CD8-positive, alpha-beta memory T cell (primary cell): ENCODE measurements at regions of chr4 and their contacts with region 1.

Region 1: DNA sequence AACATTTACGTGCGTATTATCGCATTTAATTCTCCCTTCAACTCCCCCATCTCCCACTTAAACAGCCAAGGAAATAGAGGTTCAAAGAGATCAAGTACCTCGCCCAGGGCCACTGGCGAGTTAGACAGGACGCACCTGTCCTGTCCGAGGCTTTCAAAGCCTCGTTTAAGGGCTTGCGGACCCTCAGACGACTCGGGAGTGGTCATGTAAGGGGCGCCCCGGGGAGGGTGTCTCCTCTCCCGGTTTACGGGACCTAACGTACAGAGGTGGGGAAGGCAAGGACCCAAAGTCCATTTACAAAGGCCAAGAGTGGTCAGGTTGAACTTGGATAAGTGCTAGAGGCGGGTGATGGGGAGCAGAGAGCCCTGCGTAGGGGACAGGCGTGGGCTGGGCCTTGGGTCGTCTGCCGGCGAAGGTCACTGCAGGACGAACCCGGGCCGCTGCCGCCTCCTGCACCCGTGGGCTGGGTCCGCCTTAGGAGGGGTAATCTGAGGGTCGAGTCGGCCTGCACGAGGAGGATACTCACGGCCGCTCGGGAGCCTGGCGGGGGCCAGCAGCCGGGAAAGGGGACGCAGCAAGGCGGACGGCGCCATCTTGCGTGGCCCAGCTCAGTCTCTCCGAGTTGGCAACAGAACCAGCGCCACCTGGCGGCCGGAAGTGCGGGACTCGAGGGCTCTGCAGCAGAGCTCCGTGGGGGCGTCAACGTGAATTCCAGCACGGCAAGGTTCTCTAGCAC is 5.9 kb upstream of the NAA15 start:
- DNase-seq: peak; percentile 89 to 98 (median 97)
- H3K4me3 ChIP-seq: peak overlapping the region; percentile 77
- H3K4me3 Mint-ChIP-seq: peak overlapping the region; percentile 95 to 100 (median 96)
- H3K27ac ChIP-seq: peak overlapping the region; percentile 91
- H3K27ac Mint-ChIP-seq: peak overlapping the region; percentile 97 to 99 (median 98)
- H3K4me1 ChIP-seq: peaks cover 33% of the 10 kb centered on the region
- H3K4me1 Mint-ChIP-seq: peaks cover 23 to 54% (median 49%) of the 10 kb centered on the region in 3 donors
- H3K27me3 ChIP-seq: no peaks in the 10 kb centered on the region
- H3K27me3 Mint-ChIP-seq: no peaks in the 10 kb centered on the region

Region 2: GRCh38 chr4:139099366-139099982 is 195.9 kb before region 1 on chr4:
- CTCF ChIA-PET with region 1: interaction called, 27 read pairs
- POLR2A ChIA-PET with region 1: no interaction called
- DNase-seq: peak; percentile 56 to 81 (median 64)
- H3K4me3 ChIP-seq: no peak overlapping the region
- H3K4me3 Mint-ChIP-seq: no peak overlapping the region
- H3K27ac ChIP-seq: no peak overlapping the region
- H3K27ac Mint-ChIP-seq: peak overlapping the region in 1 of 8 donors; percentile 4
- H3K4me1 ChIP-seq: no peaks in the 10 kb centered on the region
- H3K4me1 Mint-ChIP-seq: peaks cover 0 to 4% (median 2%) of the 10 kb centered on the region in 3 donors
- H3K27me3 ChIP-seq: no peaks in the 10 kb centered on the region
- H3K27me3 Mint-ChIP-seq: no peaks in the 10 kb centered on the region

Region 3: GRCh38 chr4:139177868-139178611 is 117.3 kb before region 1 on chr4:
- CTCF ChIA-PET with region 1: interaction called, 10 read pairs
- POLR2A ChIA-PET with region 1: interaction called, 25 read pairs
- DNase-seq: peak; percentile 81 to 90 (median 89)
- H3K4me3 ChIP-seq: peak overlapping the region; percentile 96
- H3K4me3 Mint-ChIP-seq: peak overlapping the region; percentile 89 to 97 (median 92)
- H3K27ac ChIP-seq: peak overlapping the region; percentile 87
- H3K27ac Mint-ChIP-seq: peak overlapping the region; percentile 84 to 98 (median 94)
- H3K4me1 ChIP-seq: peaks cover 10% of the 10 kb centered on the region
- H3K4me1 Mint-ChIP-seq: peaks cover 21 to 28% (median 27%) of the 10 kb centered on the region in 3 donors
- H3K27me3 ChIP-seq: no peaks in the 10 kb centered on the region
- H3K27me3 Mint-ChIP-seq: no peaks in the 10 kb centered on the region

Region 4: DNA sequence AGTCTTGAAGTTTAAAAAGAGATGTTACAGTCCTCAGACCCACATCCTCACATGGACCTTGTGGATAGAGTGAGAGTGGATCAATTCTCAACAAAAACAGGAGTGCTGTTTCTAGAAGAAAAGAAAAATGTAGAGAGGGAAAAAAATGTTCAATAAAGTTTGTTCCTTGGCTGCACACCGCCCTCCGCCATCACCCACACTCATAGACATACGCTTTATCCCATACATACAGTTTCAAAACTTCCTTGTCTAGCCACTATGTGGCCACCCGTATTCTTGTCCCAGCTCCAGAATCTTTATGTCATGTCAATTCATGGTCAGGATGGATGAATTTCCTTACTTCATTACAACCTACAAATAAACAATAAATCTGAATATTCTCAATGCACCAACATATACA is 94.9 kb before region 1 on chr4:
- CTCF ChIA-PET with region 1: no interaction called
- POLR2A ChIA-PET with region 1: no interaction called
- DNase-seq: no peak
- H3K4me3 ChIP-seq: no peak overlapping the region
- H3K4me3 Mint-ChIP-seq: no peak overlapping the region
- H3K27ac ChIP-seq: no peak overlapping the region
- H3K27ac Mint-ChIP-seq: peak overlapping the region in 1 of 8 donors; percentile 29
- H3K4me1 ChIP-seq: no peaks in the 10 kb centered on the region
- H3K4me1 Mint-ChIP-seq: no peaks in the 10 kb centered on the region
- H3K27me3 ChIP-seq: no peaks in the 10 kb centered on the region
- H3K27me3 Mint-ChIP-seq: peaks cover 2 to 31% of the 10 kb centered on the region in 2 donors

Region 5: DNA sequence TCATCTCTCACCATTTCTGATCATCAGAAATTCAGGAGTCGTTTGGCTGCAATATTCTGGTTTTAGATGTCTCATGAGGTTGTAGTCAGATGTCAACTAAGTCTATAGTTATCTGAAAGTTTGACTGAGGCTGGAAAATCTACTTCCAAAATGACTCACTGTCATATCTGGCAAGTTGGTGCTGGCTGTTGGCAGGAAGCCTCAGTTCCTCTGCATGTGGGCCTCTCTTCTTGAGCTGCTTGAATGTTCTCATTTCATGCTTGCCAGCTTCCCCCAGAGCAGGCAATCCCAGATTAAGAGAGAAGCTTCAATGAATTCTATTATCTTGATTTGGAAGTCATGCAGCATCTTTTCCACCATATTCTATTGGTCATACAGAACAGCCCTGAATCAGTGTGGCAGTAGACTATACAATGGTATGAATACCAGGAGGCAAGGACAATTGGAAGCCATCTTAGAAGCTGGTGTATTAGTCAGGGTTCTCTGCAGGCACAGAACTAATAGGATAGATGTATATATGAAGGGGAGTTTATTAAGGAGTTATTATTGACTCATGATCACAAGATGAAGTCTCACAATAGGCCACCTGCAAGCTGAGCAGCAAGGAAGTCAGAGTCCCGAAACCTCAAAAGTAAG is 71.6 kb before region 1 on chr4:
- CTCF ChIA-PET with region 1: interaction called, 23 read pairs
- POLR2A ChIA-PET with region 1: no interaction called
- DNase-seq: no peak
- H3K4me3 ChIP-seq: no peak overlapping the region
- H3K4me3 Mint-ChIP-seq: no peak overlapping the region
- H3K27ac ChIP-seq: no peak overlapping the region
- H3K27ac Mint-ChIP-seq: no peak overlapping the region
- H3K4me1 ChIP-seq: peaks cover 6% of the 10 kb centered on the region
- H3K4me1 Mint-ChIP-seq: peaks cover 8 to 10% (median 9%) of the 10 kb centered on the region in 3 donors
- H3K27me3 ChIP-seq: no peaks in the 10 kb centered on the region
- H3K27me3 Mint-ChIP-seq: no peaks in the 10 kb centered on the region

Region 6: DNA sequence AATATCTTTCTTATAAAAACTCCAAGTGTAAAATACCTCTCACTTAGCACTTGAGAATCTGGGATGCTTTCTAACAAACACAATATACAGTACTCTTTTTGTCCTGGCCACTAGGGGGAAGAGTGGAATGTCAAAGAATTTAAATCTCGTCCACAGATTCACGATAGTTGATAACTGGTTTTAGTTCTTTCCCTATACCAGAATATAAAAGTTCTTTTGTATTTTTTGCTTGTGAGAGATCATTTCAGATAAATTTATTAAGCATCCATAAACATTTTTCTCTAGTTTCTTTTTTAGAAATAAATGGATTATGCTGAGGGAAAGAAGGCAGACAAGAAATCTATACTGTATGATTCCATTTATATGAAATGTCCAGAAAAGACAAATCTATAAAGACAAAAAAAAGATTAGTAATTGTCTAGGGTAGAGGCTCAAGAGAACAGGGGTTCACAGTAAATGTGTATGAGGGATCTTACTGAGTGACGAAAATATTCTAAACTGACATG is 65.8 kb before region 1 on chr4:
- CTCF ChIA-PET with region 1: interaction called, 23 read pairs
- POLR2A ChIA-PET with region 1: no interaction called
- DNase-seq: peak in 2 of 5 donors; percentile 34 to 45
- H3K4me3 ChIP-seq: no peak overlapping the region
- H3K4me3 Mint-ChIP-seq: no peak overlapping the region
- H3K27ac ChIP-seq: no peak overlapping the region
- H3K27ac Mint-ChIP-seq: no peak overlapping the region
- H3K4me1 ChIP-seq: no peaks in the 10 kb centered on the region
- H3K4me1 Mint-ChIP-seq: peaks cover 2 to 5% (median 5%) of the 10 kb centered on the region in 3 donors
- H3K27me3 ChIP-seq: no peaks in the 10 kb centered on the region
- H3K27me3 Mint-ChIP-seq: no peaks in the 10 kb centered on the region

Region 7: DNA sequence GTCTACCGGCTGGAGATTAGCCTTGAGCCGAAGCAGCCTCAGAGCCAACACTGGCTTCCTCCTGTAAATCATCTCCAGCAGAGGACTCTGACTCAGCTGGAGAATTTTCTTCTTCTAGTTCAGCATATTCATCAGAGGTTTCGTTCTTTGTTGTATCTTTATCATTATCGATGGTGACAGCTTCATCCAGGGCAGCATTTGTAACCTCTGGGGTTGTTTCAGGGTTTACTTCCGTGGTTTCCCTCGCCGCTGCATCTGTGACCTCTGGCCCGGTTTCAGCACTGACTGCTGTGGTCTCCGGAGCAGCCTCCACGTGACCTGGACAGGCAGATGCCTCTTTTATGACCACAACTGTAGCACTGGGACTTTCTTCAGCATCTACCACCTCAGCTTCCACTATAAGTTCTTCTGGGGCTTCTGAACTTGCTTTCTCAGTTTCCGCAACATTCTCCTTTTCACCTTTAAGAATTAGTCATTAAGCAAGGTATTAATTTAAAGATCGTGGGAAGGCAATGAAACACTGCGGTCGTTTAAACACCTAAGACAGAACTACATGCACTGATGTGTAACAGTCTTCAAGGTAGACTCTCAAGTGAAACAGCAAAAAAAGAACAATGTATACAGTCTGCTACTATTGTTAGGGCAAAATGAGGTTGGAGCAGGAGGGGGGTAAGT is 28.7 kb before region 1 on chr4:
- CTCF ChIA-PET with region 1: interaction called, 20 read pairs
- POLR2A ChIA-PET with region 1: interaction called, 8 read pairs
- DNase-seq: peak; percentile 50 to 78 (median 63)
- H3K4me3 ChIP-seq: peak overlapping the region; percentile 55
- H3K4me3 Mint-ChIP-seq: peak overlapping the region; percentile 69 to 91 (median 85)
- H3K27ac ChIP-seq: peak overlapping the region; percentile 49
- H3K27ac Mint-ChIP-seq: peak overlapping the region; percentile 75 to 97 (median 90)
- H3K4me1 ChIP-seq: peaks cover 12% of the 10 kb centered on the region
- H3K4me1 Mint-ChIP-seq: peaks cover 15 to 24% (median 19%) of the 10 kb centered on the region in 3 donors
- H3K27me3 ChIP-seq: no peaks in the 10 kb centered on the region
- H3K27me3 Mint-ChIP-seq: peaks cover 0 to 1% of the 10 kb centered on the region in 2 donors

Region 8: GRCh38 chr4:139279760-139280620 is 15.4 kb before region 1 on chr4 and contains the start of gene MGARP:
- CTCF ChIA-PET with region 1: interaction called, 10 read pairs
- POLR2A ChIA-PET with region 1: no interaction called
- DNase-seq: peak in 4 of 5 donors; percentile 3 to 46 (median 16)
- H3K4me3 ChIP-seq: peak within 1 kb of the TSS; percentile 44
- H3K4me3 Mint-ChIP-seq: peak within 1 kb of the TSS; percentile 75 to 92 (median 75)
- H3K27ac ChIP-seq: no peak within 1 kb of the TSS
- H3K27ac Mint-ChIP-seq: peak within 1 kb of the TSS in 1 of 8 donors; percentile 24
- H3K4me1 ChIP-seq: peaks cover 17% of the 10 kb centered on the region
- H3K4me1 Mint-ChIP-seq: peaks cover 16 to 22% (median 17%) of the 10 kb centered on the region in 3 donors
- H3K27me3 ChIP-seq: peaks cover 12% of the 10 kb centered on the region
- H3K27me3 Mint-ChIP-seq: peaks cover 46 to 47% of the 10 kb centered on the region in 2 donors
- total RNA-seq, gene MGARP: not detected